PC-9 (cell line): ENCODE measurements at regions of chr11 and their contacts with region 1.

Region 1: GRCh38 chr11:12581923-12582322 is 92.3 kb upstream of the TEAD1 start:
- DNase-seq: peak; percentile 43 to 77
- H3K4me3 ChIP-seq: no peak overlapping the region
- H3K27ac ChIP-seq: no peak overlapping the region
- H3K4me1 ChIP-seq: peaks cover 14% of the 10 kb centered on the region
- H3K27me3 ChIP-seq: no peaks in the 10 kb centered on the region
- CTCF ChIP-seq: no peak

Region 2: DNA sequence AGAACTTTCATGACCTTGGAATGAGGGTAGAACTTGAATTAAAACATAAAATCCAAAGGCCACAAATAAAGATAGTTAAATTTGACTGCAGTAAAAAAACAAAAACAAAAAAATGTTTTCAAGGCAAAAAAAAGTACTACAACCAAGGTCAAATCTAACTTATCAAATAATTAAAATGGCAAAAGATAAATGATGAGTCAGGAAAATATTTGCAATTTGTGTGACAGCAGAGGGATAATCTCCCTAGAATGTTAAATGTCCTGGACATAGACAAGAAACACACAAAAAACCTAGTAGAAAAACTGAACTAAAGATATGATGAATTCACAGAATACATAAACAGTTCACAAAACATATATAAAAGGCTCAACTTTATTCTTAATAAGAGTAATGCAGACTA is 17.9 kb before region 1 on chr11:
- CTCF ChIA-PET with region 1: no interaction called
- POLR2A ChIA-PET with region 1: interaction called, 11 read pairs
- intact Hi-C with region 1: no loop called
- DNase-seq: no peak
- H3K4me3 ChIP-seq: no peak overlapping the region
- H3K27ac ChIP-seq: no peak overlapping the region
- H3K4me1 ChIP-seq: no peaks in the 10 kb centered on the region
- H3K27me3 ChIP-seq: no peaks in the 10 kb centered on the region
- CTCF ChIP-seq: no peak